Activated CD4-positive, alpha-beta memory T cell treated with anti-CD3 and anti-CD28 coated beads for 36 hours (primary cell): ENCODE measurements at regions of chr16 and their contacts with region 1.

Region 1: GRCh38 chr16:56203052-56203451 is 11.8 kb downstream of the GNAO1 start:
- DNase-seq: peak; percentile 80
- H3K4me3 Mint-ChIP-seq: no peak overlapping the region
- H3K27ac Mint-ChIP-seq: no peak overlapping the region
- H3K4me1 Mint-ChIP-seq: no peaks in the 10 kb centered on the region
- H3K27me3 Mint-ChIP-seq: no peaks in the 10 kb centered on the region

Region 2: GRCh38 chr16:55944377-55944802 is 258.7 kb before region 1 on chr16:
- CTCF ChIA-PET with region 1: interaction called, 47 read pairs
- POLR2A ChIA-PET with region 1: no interaction called
- intact Hi-C with region 1: loop called (anchors 1 kb)
- DNase-seq: peak; percentile 62
- H3K4me3 Mint-ChIP-seq: no peak overlapping the region
- H3K27ac Mint-ChIP-seq: no peak overlapping the region
- H3K4me1 Mint-ChIP-seq: no peaks in the 10 kb centered on the region
- H3K27me3 Mint-ChIP-seq: peaks cover 43% of the 10 kb centered on the region

Region 3: GRCh38 chr16:56119133-56119532 is 83.9 kb before region 1 on chr16:
- CTCF ChIA-PET with region 1: interaction called, 4 read pairs
- POLR2A ChIA-PET with region 1: no interaction called
- intact Hi-C with region 1: loop called (anchors 1 kb)
- DNase-seq: no peak
- H3K4me3 Mint-ChIP-seq: no peak overlapping the region
- H3K27ac Mint-ChIP-seq: no peak overlapping the region
- H3K4me1 Mint-ChIP-seq: peaks cover 6% of the 10 kb centered on the region
- H3K27me3 Mint-ChIP-seq: peaks cover 4% of the 10 kb centered on the region

Region 4: DNA sequence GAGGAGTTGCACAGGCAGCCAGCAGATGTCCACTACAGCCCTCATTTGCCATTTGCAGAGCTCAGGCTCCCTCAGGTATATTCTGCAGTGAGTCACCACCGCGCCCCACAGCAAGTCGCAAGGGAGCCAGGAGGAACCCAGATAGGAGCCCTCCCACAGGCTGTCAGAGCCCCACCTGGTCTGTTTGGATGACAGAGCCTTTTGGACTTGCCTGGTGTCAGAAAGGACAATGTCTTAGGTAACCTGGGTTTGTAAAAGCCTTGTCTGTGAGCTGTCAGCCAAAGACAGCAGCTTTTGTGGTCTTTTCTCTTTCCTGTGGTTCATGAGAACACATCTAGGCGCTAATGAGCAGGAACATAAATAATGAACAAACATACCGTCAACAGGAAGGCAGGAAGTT is 59.1 kb after region 1 on chr16:
- CTCF ChIA-PET with region 1: interaction called, 8 read pairs
- POLR2A ChIA-PET with region 1: no interaction called
- intact Hi-C with region 1: loop called (anchors 5 kb)
- DNase-seq: peak; percentile 61
- H3K4me3 Mint-ChIP-seq: no peak overlapping the region
- H3K27ac Mint-ChIP-seq: peak overlapping the region; percentile 14
- H3K4me1 Mint-ChIP-seq: peaks cover 38% of the 10 kb centered on the region
- H3K27me3 Mint-ChIP-seq: no peaks in the 10 kb centered on the region

Region 5: GRCh38 chr16:56356276-56357240 is 153.5 kb after region 1 on chr16:
- CTCF ChIA-PET with region 1: interaction called, 3 read pairs
- POLR2A ChIA-PET with region 1: no interaction called
- intact Hi-C with region 1: loop called (anchors 1 kb)
- DNase-seq: peak; percentile 74
- H3K4me3 Mint-ChIP-seq: peak overlapping the region; percentile 73
- H3K27ac Mint-ChIP-seq: peak overlapping the region; percentile 89
- H3K4me1 Mint-ChIP-seq: peaks cover 23% of the 10 kb centered on the region
- H3K27me3 Mint-ChIP-seq: no peaks in the 10 kb centered on the region